ENCODE measurements at regions of chr20 and their contacts with region 1.

Region 1: GRCh38 chr20:52083627-52084232 is 107.8 kb downstream of the ZFP64 start:
- DNase-seq: no peak
- ATAC-seq: peak; percentile 67

Region 2: DNA sequence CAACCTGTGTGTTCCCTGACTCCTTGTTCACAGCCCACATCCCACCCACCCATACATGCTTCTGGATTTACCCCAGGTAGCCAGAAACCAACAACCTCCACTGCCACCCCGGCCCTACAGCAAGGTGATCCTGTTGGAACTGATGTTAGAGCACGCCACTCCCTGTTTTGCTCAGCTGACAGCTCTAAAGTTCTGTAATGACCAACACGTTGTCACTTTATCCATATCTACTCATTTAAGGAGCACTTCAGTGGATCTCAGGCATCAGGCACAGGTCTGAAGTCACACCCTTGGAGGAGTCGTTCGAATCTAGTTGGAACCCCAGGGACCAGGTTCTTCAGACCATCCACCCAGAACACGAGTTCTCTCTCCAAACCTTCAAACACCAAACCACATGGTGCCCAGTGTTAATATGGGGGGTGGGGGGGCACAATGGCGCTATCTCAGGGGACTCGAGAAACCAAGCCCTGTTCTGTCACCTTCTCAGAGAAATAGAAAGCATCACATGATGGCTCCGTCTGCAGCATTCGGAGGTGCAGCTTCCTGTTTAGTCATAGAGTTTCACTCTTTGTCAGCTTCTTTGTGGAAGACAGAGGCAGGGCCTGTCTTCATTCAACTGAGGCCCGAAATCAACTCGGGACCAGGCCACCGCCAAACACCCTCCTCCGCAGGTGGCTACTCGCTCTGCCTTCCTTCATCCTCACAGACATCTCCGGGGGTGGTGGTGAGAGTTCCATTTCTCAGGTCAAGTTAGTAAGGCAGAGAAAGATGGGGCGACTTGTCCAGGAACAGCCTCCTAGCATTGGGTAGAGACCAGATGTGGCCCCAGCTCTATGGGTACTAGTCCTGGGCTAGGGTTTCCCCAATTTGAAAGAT is 683.4 kb before region 1 on chr20:
- intact Hi-C with region 1: no loop called
- DNase-seq: no peak
- ATAC-seq: no peak

Region 3: GRCh38 chr20:51639206-51639832 is 444.4 kb before region 1 on chr20:
- intact Hi-C with region 1: loop called (anchors 5 kb)
- DNase-seq: peak; percentile 73
- ATAC-seq: peak; percentile 85

Region 4: GRCh38 chr20:52160621-52161204 is 77.0 kb after region 1 on chr20:
- intact Hi-C with region 1: no loop called
- DNase-seq: no peak
- ATAC-seq: no peak

Measured in Right ventricle myocardium superior (tissue), 1 donor.